Right ventricle myocardium superior (tissue), 1 donor: ENCODE measurements at regions of chr20 and their contacts with region 1.

Region 1: DNA sequence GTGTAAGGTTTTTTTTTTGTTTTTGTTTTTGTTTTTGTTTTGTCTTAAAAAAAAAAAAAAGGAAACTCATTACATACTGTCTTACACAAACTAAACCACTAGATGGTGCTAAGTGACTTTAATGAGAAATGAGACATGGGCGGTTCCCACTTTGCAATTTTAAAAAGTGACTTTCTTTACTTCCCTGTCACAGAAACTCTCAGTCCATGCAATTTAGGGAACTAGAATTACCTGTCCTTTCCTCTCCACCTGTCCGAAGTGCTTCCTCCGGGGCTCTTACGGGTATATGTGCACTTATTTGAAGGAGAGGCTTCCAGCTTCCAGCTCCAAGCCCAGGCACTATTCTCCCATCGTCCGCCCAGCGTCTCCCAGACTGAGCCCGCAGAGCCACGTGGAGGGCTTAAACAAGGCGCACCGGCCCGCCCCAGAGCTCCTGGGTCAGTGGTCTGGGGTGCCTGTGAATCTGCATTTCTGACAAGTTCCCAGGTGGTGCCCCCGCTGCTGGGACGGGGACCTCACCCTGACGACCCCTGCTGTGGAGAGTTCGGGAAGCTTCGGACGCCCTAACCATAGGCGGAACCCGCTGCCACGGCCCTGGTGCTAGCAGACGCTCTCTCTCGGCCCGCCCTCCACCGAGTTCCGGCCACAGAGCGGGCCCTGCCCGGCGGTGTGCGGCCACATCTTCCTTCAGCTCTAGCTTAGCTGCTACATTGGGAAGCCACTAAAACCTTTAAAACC is 26.1 kb downstream of the BFSP1 start:
- DNase-seq: peak; percentile 81
- ATAC-seq: peak; percentile 89

Region 2: DNA sequence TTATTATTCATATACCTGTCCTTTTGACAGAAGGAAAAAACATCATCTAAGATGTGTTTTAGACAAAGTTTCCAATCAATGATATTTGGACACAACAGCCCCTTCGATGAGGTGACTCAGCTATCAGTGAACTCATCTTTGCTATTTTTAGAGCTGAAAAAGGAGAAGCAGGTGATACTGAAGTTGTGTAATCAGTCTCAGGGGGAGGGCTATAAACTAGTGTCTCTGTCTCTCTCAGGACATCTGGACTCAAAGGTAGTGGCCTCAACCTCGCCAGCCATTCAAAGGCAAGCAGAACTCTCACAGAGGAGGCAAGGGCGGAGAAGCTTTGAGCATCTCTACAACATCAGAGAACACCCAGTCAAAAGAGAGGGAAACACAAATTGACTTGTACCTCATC is 109.3 kb before region 1 on chr20:
- intact Hi-C with region 1: no loop called
- DNase-seq: no peak
- ATAC-seq: no peak

Region 3: DNA sequence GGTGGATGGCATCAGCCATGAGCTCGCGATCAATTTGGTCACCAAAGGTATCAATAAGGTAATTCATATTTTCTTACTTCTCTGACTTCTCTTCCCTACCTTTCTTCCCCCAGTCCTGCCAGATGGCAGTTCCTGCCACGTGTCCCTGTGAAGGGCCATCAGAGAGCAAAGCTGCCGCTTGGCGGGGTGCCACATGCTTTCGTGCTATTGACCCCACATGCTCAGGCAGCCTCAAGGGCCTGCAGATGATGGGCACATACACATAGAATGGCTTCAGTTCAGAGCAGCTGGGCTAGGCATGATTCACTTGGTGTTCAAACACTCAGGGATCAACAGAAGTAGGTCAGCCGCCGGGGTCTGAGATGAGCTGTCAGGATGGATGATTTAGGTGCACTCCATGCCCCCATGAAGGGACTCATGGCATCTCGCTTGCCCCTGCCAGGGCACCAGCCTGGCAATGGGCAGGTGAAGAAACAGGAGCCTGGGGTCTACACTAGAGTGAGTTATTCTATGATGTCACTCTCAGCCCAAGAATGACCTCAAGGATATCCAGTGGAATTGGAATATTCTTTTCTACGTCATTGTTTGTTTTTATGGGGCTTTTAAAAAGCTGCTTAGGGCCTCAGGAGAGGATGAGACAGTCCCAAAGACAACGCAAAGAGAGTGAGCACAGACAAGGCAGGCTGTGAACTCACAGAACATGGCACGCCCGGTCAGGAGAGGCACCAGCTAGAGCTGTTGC is 220.2 kb after region 1 on chr20:
- intact Hi-C with region 1: no loop called
- DNase-seq: peak; percentile 52
- ATAC-seq: no peak

Region 4: DNA sequence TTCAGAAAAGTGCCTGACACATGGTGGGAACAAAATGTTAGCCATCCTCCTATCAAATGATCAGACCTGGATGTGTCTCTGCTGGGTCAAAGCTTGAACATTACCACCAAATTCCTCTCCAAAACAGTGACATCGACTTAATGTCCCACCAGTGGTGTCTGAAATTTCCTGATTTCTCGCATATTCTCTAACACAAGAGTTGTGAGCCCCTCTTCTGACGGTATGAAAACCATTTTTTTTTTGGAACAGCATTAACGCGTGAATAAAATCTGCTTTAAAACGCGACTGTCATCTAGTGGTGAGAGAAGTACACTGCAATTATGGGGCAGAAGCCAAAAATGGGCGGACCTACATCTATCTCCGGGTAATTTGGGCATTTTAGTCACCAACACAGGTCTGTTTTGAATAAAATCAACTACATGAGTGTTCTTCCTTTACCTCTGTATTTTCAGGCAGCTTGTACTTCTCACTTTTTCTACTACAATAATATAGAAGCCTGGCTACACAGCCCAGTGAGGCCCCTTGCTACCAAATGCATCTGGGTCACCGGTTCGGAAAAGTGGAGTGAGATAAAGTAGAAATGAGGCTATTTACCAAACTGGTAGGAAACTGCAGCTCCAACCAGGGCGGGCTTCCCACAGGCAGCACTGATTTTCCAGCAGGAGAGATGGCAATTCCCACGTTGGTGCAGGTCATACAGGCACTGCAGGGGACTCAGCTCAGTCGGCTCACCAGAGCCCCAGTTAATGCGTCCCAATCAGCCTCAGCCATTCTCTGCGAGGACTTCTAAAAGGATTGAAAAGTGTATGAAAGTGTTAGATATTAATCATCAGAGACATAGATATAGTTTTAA is 491.1 kb after region 1 on chr20:
- intact Hi-C with region 1: loop called (anchors 5 kb)
- DNase-seq: no peak
- ATAC-seq: peak; percentile 85

Region 5: DNA sequence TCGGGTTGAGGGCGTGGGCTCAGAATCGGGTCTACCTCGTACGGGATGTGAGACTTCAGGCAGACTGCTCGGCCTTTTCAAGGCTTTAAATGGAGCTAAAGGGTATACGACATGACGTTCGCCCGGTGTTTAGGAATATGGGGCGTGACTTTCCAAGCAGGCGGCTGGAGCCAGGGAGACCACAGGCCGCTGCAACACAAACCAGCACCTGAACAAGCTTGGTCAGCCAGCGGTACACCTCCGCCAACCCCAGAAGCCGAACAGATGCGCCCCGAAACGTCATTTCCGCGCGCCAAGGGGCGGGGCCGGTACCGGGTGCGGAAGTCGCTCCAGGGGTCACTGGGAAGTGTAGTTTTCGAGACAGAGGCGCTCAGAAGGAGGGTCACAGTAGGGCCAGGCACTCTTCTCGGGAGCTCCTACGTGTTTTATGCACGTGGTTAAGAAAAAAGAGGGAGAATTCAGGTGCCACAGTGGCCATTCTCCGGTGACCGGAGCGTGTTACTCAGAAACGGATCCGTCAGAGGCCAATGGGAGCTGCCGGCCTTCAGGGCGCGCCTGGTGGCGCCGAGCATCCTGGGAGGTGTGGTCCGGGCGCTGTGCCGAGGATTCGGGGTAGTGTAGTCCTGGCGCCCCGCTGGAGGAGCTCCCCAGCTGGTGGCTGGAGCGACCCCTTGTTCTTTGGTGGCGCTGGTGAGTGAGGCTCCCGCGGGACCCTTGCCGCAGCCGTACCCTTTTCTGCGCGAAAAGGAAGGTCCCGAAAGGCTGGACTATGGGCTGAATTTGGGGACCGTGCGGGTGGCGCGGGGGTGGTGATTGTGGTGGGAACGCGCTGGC is 783.1 kb after region 1 on chr20 and contains the start of gene ZNF133:
- intact Hi-C with region 1: loop called (anchors 10 kb)
- DNase-seq: peak; percentile 99
- ATAC-seq: peak; percentile 100
- total RNA-seq, gene ZNF133: 5.3 TPM